ENCODE measurements at regions of chr10 and their contacts with region 1.

Region 1: DNA sequence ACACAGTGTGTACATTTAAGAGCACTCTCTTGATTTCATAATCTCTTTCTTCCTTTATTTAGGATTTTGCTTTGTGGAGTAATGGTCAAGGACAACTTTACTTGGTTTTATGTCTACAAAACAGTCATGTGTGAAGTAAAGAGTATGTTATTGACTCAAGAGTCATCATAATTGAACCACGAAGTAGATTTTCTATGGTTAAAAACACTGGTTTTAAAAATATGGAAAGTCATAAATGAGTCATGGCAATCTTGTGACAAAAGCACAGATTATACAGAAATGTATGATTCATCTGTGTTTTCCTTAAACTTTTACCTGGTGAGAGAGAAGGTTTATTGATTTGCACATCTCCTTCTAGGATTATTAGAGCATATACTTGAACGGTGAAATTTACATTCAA is 969.7 kb downstream of the GATA3 start:
- DNase-seq: no peak
- H3K4me3 Mint-ChIP-seq: no peak overlapping the region
- H3K27ac Mint-ChIP-seq: peak overlapping the region; percentile 67
- H3K4me1 Mint-ChIP-seq: peaks cover 53% of the 10 kb centered on the region
- H3K27me3 Mint-ChIP-seq: peaks cover 11% of the 10 kb centered on the region

Region 2: GRCh38 chr10:8269976-8270375 is 754.2 kb before region 1 on chr10:
- CTCF ChIA-PET with region 1: no interaction called
- POLR2A ChIA-PET with region 1: no interaction called
- intact Hi-C with region 1: no loop called
- DNase-seq: peak; percentile 13
- H3K4me3 Mint-ChIP-seq: no peak overlapping the region
- H3K27ac Mint-ChIP-seq: no peak overlapping the region
- H3K4me1 Mint-ChIP-seq: no peaks in the 10 kb centered on the region
- H3K27me3 Mint-ChIP-seq: no peaks in the 10 kb centered on the region

Region 3: GRCh38 chr10:8893102-8893501 is 131.1 kb before region 1 on chr10:
- CTCF ChIA-PET with region 1: no interaction called
- POLR2A ChIA-PET with region 1: no interaction called
- intact Hi-C with region 1: loop called (anchors 1 kb)
- DNase-seq: no peak
- H3K4me3 Mint-ChIP-seq: no peak overlapping the region
- H3K27ac Mint-ChIP-seq: peak overlapping the region; percentile 4
- H3K4me1 Mint-ChIP-seq: peaks cover 14% of the 10 kb centered on the region
- H3K27me3 Mint-ChIP-seq: peaks cover 9% of the 10 kb centered on the region

Region 4: DNA sequence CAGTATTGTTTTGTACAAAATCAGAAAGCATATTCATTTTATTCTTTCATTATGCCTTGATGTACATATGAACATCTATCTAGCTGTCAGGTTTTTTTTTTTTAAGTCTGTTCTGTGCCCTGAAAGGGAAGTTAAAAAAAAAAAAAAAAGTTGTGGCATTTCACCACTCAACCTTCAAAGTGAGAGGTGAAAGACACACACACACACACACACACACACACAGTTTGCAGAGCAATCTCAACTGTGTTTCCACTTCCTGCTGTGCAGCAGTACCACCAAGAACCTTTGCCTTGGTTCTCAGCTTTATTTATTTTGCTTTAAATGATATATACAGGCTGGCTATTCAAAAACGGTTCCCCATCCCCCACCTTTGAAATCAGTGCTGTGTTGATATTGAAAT is 14.1 kb before region 1 on chr10:
- CTCF ChIA-PET with region 1: interaction called, 3 read pairs
- POLR2A ChIA-PET with region 1: interaction called, 4 read pairs
- intact Hi-C with region 1: loop called (anchors 1 kb)
- DNase-seq: peak; percentile 38
- H3K4me3 Mint-ChIP-seq: peak overlapping the region; percentile 39
- H3K27ac Mint-ChIP-seq: peak overlapping the region; percentile 79
- H3K4me1 Mint-ChIP-seq: peaks cover 54% of the 10 kb centered on the region
- H3K27me3 Mint-ChIP-seq: no peaks in the 10 kb centered on the region

Region 5: GRCh38 chr10:9081253-9081652 is 57.0 kb after region 1 on chr10:
- CTCF ChIA-PET with region 1: no interaction called
- POLR2A ChIA-PET with region 1: no interaction called
- intact Hi-C with region 1: loop called (anchors 2 kb)
- DNase-seq: no peak
- H3K4me3 Mint-ChIP-seq: no peak overlapping the region
- H3K27ac Mint-ChIP-seq: peak overlapping the region; percentile 10
- H3K4me1 Mint-ChIP-seq: peaks cover 24% of the 10 kb centered on the region
- H3K27me3 Mint-ChIP-seq: peaks cover 8% of the 10 kb centered on the region

Region 6: DNA sequence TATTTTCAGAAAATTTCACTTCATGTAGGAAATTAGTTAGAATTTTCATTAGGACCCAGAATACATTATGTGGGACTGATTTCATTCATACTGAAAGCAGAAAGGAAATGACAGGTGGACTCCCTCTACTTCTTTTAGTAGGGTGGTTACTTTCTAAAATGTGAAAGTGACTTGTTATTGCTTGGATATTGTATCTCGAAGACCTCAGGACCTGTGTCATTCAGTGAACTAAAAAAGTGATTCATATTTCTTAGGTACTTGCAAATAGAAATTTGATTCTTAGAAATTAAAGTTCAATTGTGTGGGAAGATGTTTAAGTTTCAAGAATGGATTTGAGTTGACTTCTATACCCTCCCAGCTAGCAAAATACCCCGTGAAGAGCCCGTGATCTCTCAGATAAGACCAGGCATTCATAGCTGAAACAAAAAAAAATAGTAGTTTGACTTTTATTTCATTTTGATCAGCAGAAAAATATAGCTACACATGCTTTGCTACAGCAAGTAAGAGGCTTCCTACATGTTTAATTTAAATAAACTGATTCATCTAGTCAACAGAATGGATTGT is 67.4 kb after region 1 on chr10:
- CTCF ChIA-PET with region 1: no interaction called
- POLR2A ChIA-PET with region 1: no interaction called
- intact Hi-C with region 1: loop called (anchors 1 kb)
- DNase-seq: peak; percentile 48
- H3K4me3 Mint-ChIP-seq: no peak overlapping the region
- H3K27ac Mint-ChIP-seq: peak overlapping the region; percentile 30
- H3K4me1 Mint-ChIP-seq: peaks cover 24% of the 10 kb centered on the region
- H3K27me3 Mint-ChIP-seq: no peaks in the 10 kb centered on the region

Region 7: GRCh38 chr10:9294865-9295264 is 270.7 kb after region 1 on chr10:
- CTCF ChIA-PET with region 1: no interaction called
- POLR2A ChIA-PET with region 1: no interaction called
- intact Hi-C with region 1: loop called (anchors 10 kb)
- DNase-seq: no peak
- H3K4me3 Mint-ChIP-seq: no peak overlapping the region
- H3K27ac Mint-ChIP-seq: peak overlapping the region; percentile 73
- H3K4me1 Mint-ChIP-seq: peaks cover 21% of the 10 kb centered on the region
- H3K27me3 Mint-ChIP-seq: peaks cover 9% of the 10 kb centered on the region

Measured in activated CD4-positive, alpha-beta memory T cell treated with anti-CD3 and anti-CD28 coated beads for 36 hours (primary cell).